Lower leg skin (tissue), 4 donors: ENCODE measurements at regions of chr17 and their contacts with region 1.

Region 1: GRCh38 chr17:27593232-27593856 is 37.6 kb upstream of the LGALS9 start:
- DNase-seq: no peak
- H3K4me3 ChIP-seq: no peak overlapping the region
- CTCF ChIP-seq: no peak
- POLR2A ChIP-seq: no peak

Region 2: DNA sequence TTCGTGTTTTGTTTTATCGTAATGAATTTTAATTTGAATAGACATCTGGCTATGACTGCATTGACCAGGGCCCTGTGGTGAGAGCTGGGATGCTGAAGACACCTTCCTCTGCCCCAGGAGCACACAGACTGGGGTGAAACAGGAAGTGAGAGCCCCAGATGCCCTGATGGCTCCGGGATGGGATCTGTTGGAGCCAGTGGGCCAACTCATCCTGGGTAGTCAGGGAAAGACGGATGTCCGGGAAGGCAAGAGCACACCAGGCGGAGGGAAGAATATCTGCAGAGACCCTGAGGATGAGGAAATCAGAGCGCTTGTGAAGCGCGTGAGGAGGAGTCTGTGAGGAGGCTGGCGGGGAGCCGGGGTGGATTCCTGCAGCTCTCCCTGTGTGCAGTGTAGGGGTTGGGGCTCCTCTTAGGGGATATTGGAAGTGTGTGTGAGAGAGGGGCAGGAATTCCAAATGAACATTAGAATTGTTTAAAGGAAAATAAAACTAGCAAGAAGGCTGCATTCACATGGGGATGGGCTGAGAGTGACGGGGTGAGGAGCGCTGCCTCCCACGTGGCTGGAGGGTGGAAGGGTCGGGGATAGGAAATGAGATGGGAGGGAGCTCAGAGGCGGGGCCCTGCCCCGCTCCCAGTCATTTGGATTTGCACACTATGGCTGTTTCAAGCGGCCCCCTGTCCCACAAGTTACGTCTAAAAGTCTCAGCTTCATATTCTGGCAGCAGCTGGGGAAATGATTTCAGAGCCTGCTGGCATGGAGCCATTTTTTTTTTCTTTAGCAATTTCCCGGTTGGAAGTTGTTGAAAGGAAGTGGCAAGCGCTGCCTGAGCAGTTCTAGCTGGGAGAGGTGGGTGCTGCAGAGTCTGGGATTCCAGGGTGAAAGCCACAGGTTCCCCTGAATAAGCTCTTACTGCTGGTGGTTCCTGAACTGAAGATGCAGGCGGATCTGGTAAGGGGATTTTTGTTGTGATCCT is 33.5 kb before region 1 on chr17:
- intact Hi-C with region 1: loop called (anchors 5 kb)
- DNase-seq: peak; percentile 39 to 91
- H3K4me3 ChIP-seq: no peak overlapping the region
- CTCF ChIP-seq: no peak
- POLR2A ChIP-seq: no peak

Region 3: DNA sequence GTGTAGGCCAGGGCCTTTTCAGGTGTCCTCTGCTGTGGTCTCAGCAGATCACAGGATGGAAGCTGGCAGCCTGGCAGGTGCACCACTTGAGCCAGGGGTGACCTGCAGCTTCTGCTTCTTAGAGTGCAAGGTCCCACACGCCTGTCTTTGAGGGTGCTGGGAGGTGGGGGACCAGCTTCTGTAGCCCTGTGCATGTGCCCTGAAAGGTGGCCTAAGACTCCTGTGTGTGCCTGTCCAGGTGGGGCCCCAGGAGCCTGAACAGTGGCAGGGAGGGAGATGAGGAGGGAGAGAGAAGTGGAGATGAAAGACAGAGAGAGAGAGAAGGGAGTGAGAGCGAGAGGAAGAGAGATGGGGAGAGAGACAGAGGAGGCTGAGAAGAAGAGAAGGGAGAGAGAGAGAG is 83.8 kb after region 1 on chr17:
- intact Hi-C with region 1: no loop called
- DNase-seq: no peak
- H3K4me3 ChIP-seq: no peak overlapping the region
- CTCF ChIP-seq: no peak
- POLR2A ChIP-seq: no peak